Activated CD4-positive, alpha-beta T cell treated with anti-CD3 and anti-CD28 coated beads, Interleukin-2, amount 10 ng/mL, durations not matched to agents 7 days and 5 days (primary cell): ENCODE measurements at regions of chr1 and their contacts with region 1.

Region 1: DNA sequence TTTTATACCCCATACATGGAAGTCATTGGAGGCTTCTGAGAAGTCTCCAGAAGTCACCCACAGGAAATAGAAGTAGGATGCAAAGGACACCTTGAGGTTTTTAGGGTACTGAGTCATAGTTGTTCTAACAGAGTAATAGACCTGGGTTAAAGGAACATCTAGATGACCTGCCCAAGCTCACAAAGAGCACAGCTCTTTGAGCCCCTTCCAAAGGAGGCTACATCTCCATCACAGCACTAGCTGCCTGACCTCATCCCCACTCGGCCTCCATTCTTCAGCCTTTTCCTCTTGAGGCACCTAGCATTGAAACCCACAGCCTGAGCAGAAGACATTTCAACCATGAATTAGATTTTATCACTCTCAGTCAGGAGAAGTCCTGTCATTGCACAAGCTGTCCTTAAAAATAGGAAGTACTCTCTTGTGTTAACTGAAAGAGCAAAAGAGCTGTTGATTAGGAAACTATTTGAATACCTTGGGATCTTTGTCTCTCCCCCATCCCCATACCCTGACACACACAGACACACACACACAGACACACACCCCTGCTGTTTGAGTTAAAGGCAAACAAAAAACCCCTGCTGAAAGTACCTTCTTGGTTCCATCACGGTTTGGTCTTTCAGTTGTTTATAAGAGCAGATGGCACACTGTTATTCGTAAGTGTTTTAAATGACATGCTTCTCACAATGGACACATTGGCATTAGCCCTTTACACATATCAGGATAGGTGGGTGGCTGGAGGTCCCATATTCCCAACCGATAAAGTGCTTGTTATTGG is 22.2 kb downstream of the MKNK1 start:
- DNase-seq: peak; percentile 47
- H3K4me3 Mint-ChIP-seq: peak overlapping the region; percentile 63
- H3K27ac Mint-ChIP-seq: peak overlapping the region; percentile 96
- H3K4me1 Mint-ChIP-seq: peaks cover 54% of the 10 kb centered on the region
- H3K27me3 Mint-ChIP-seq: no peaks in the 10 kb centered on the region

Region 2: DNA sequence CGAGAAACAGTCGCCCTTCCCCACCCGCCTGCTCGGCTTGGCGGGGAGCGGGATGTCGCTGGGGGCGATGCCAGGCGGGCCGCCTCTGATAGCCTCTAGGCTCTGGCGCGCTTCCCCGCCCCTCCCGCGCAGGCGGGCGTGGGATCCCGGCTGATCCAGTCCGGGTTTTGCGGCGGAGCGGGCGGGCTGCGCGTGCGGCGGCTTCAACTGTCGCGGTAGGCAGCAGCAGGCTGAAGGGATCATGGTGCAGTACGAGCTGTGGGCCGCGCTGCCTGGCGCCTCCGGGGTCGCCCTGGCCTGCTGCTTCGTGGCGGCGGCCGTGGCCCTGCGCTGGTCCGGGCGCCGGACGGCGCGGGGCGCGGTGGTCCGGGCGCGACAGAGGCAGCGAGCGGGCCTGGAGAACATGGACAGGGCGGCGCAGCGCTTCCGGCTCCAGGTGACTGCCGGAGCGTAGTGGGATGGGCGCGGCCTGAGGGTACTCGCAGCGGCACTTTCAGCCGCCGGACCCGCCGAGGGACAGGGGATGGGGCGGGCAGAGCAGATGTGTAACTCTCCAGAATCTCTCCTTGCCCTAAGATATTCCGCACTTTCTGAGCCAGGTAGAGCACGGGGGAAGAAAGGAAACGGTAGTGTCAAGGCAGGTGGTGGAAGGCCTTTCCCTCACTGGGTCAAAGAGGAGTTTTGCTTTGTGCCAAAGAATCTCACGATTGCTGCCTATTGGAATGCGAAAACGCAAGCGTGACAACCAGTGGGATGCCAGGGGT is 187.6 kb before region 1 on chr1 and contains the start of gene FAAH:
- CTCF ChIA-PET with region 1: no interaction called
- POLR2A ChIA-PET with region 1: no interaction called
- DNase-seq: peak; percentile 55
- H3K4me3 Mint-ChIP-seq: peak within 1 kb of the TSS; percentile 69
- H3K27ac Mint-ChIP-seq: peak within 1 kb of the TSS; percentile 78
- H3K4me1 Mint-ChIP-seq: peaks cover 9% of the 10 kb centered on the region
- H3K27me3 Mint-ChIP-seq: peaks cover 10% of the 10 kb centered on the region
- total RNA-seq, gene FAAH: 6.1 to 7.6 TPM

Region 3: DNA sequence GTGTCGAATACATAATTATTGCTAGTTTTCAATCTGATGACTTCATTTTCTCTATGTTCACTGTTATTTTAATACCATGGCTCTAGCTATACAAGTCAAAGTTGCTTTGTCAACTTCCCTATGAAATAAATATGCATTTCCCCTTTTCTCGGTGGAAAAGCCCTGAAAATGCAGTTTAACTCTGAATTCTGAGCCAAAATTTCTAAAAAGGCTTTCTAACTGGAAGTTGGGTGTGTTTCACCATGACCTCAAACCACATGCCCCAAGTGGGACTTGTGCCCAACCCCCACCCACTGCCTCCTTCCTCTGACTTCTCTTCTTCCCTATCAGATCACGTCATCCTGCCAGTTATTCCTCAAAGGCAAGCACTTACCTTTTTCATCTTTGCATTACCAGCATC is 13.3 kb after region 1 on chr1:
- CTCF ChIA-PET with region 1: interaction called, 16 read pairs
- POLR2A ChIA-PET with region 1: no interaction called
- DNase-seq: peak; percentile 34
- H3K4me3 Mint-ChIP-seq: peak overlapping the region; percentile 9
- H3K27ac Mint-ChIP-seq: peak overlapping the region; percentile 21
- H3K4me1 Mint-ChIP-seq: peaks cover 70% of the 10 kb centered on the region
- H3K27me3 Mint-ChIP-seq: no peaks in the 10 kb centered on the region